CD4-positive, alpha-beta memory T cell (primary cell): ENCODE measurements at regions of chr1 and their contacts with region 1.

Region 1: DNA sequence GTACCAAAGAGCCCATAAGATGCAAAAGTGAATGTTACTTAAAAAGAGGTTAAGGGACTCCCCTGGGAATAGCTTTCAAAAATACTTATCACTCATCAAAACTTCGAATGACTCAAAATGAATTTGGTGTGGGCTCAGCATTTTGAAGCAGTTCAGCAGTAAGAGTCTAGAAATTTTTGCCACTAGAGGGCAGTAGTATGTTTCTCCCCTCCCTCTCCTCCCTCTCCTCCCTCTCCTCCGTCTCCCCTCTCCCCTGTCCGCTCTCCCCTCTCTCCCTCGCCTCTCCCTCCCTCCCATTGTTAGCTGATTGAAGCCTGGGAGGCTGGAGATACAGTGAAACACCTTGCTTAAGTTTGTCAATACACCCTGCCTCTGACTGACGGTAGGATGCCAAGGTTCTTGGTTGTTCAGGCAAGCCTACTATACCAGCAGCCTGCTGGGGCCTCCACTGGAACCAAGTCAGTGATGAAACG is 70.8 kb upstream of the TENT5C start:
- DNase-seq: peak; percentile 61 to 68 (median 66)
- H3K4me3 ChIP-seq: no peak overlapping the region
- H3K4me3 Mint-ChIP-seq: peak overlapping the region in 1 of 8 donors; percentile 21
- H3K27ac ChIP-seq: no peak overlapping the region
- H3K27ac Mint-ChIP-seq: peak overlapping the region in 3 of 7 donors; percentile 23 to 53 (median 27)
- H3K4me1 ChIP-seq: peaks cover 21% of the 10 kb centered on the region
- H3K4me1 Mint-ChIP-seq: peaks cover 0 to 6% (median 0%) of the 10 kb centered on the region in 4 donors
- H3K27me3 ChIP-seq: no peaks in the 10 kb centered on the region
- H3K27me3 Mint-ChIP-seq: no peaks in the 10 kb centered on the region

Region 2: GRCh38 chr1:117481410-117481809 is 53.6 kb before region 1 on chr1:
- CTCF ChIA-PET with region 1: no interaction called
- POLR2A ChIA-PET with region 1: no interaction called
- intact Hi-C with region 1: no loop called
- DNase-seq: no peak
- H3K4me3 ChIP-seq: no peak overlapping the region
- H3K4me3 Mint-ChIP-seq: peak overlapping the region in 1 of 8 donors; percentile 6
- H3K27ac ChIP-seq: no peak overlapping the region
- H3K27ac Mint-ChIP-seq: no peak overlapping the region
- H3K4me1 ChIP-seq: no peaks in the 10 kb centered on the region
- H3K4me1 Mint-ChIP-seq: peaks cover 0 to 6% (median 3%) of the 10 kb centered on the region in 4 donors
- H3K27me3 ChIP-seq: no peaks in the 10 kb centered on the region
- H3K27me3 Mint-ChIP-seq: no peaks in the 10 kb centered on the region

Region 3: DNA sequence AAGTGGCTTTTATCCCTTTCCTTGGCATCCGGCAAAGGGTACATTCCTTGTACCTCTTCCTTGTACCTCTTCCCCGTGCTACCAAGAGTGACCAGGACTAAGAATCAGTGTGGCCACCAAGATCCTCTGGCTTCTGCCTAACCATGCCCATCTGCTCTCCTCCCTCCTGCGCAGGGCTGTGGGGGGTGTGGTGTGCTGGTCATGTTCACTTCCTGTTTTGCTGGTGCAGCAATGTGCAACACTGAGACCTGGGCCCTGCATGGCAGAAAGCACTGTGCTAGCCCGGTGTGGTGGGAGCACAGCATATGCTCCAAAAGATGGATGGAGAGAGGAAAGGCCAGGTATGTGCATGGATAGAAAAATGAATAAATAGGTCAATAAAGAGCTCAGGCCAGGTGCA is 37.5 kb after region 1 on chr1:
- CTCF ChIA-PET with region 1: interaction called, 15 read pairs
- POLR2A ChIA-PET with region 1: no interaction called
- intact Hi-C with region 1: no loop called
- DNase-seq: peak in 4 of 5 donors; percentile 19 to 26 (median 20)
- H3K4me3 ChIP-seq: no peak overlapping the region
- H3K4me3 Mint-ChIP-seq: peak overlapping the region in 7 of 8 donors; percentile 22 to 78 (median 52)
- H3K27ac ChIP-seq: no peak overlapping the region
- H3K27ac Mint-ChIP-seq: peak overlapping the region in 5 of 7 donors; percentile 1 to 86 (median 60)
- H3K4me1 ChIP-seq: peaks cover 26% of the 10 kb centered on the region
- H3K4me1 Mint-ChIP-seq: peaks cover 13 to 36% (median 22%) of the 10 kb centered on the region in 4 donors
- H3K27me3 ChIP-seq: no peaks in the 10 kb centered on the region
- H3K27me3 Mint-ChIP-seq: no peaks in the 10 kb centered on the region

Region 4: DNA sequence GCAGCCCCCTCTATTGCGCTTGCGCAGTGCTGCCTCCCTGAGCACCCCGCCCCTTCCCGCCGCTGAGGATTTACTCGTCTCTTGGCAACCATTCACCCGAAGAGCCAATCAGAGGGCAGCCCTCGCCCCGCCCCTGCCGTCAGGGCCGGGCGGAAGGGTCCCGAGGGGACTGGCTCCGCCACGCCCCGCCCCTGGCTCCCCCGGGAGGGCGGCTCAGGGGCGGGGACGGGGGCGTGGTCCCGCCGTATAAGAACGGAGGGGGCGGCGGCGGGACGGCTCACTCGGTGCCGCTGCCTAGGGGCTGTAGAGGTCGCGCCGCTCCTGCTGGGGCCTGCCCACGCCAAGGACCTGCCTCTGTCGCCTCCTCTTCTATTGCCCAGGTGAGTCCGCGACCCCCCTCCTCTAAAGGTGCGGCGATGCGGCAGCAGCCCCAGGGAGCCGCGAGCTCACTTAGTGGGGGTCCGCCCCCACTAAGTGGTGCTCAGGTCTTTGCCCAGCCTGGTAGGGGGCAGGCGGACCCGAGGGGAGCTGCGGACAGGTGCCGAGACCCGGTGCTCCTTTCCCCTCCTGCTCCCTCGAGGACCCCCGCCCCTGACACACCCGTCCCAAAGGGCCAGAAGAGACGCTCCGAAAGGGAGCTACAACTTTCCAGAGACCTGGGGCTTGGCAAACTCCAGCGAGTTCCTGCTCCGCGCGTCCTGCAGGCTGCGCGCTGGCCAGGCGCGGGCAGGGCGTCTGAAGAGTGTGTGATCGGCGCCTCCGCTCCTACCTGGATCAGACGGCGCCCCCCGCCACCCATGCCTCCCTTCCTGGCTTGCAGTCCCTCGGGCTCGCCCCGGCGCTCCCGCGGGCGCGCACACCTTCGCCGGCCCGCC is 71.0 kb after region 1 on chr1 and contains the start of gene TENT5C:
- CTCF ChIA-PET with region 1: interaction called, 40 read pairs
- POLR2A ChIA-PET with region 1: interaction called, 24 read pairs
- intact Hi-C with region 1: loop called (anchors 1 kb)
- DNase-seq: peak; percentile 99 to 100 (median 99)
- H3K4me3 ChIP-seq: peak within 1 kb of the TSS; percentile 93 to 98
- H3K4me3 Mint-ChIP-seq: peak within 1 kb of the TSS; percentile 91 to 100 (median 98)
- H3K27ac ChIP-seq: peak within 1 kb of the TSS; percentile 92
- H3K27ac Mint-ChIP-seq: peak within 1 kb of the TSS; percentile 94 to 100 (median 99)
- H3K4me1 ChIP-seq: peaks cover 43% of the 10 kb centered on the region
- H3K4me1 Mint-ChIP-seq: peaks cover 28 to 59% (median 37%) of the 10 kb centered on the region in 4 donors
- H3K27me3 ChIP-seq: no peaks in the 10 kb centered on the region
- H3K27me3 Mint-ChIP-seq: no peaks in the 10 kb centered on the region
- total RNA-seq, gene TENT5C: 13.9 to 14.8 TPM

Region 5: GRCh38 chr1:117654493-117655219 is 119.6 kb after region 1 on chr1:
- CTCF ChIA-PET with region 1: interaction called, 89 read pairs
- POLR2A ChIA-PET with region 1: interaction called, 9 read pairs
- intact Hi-C with region 1: no loop called
- DNase-seq: peak in 4 of 5 donors; percentile 31 to 44 (median 37)
- H3K4me3 ChIP-seq: peak overlapping the region; percentile 8 to 20
- H3K4me3 Mint-ChIP-seq: peak overlapping the region; percentile 52 to 88 (median 76)
- H3K27ac ChIP-seq: peak overlapping the region; percentile 9
- H3K27ac Mint-ChIP-seq: peak overlapping the region; percentile 81 to 99 (median 94)
- H3K4me1 ChIP-seq: peaks cover 95% of the 10 kb centered on the region
- H3K4me1 Mint-ChIP-seq: peaks cover 75 to 92% (median 86%) of the 10 kb centered on the region in 4 donors
- H3K27me3 ChIP-seq: no peaks in the 10 kb centered on the region
- H3K27me3 Mint-ChIP-seq: no peaks in the 10 kb centered on the region

Region 6: GRCh38 chr1:117681143-117681542 is 146.1 kb after region 1 on chr1:
- CTCF ChIA-PET with region 1: interaction called, 278 read pairs
- POLR2A ChIA-PET with region 1: interaction called, 3 read pairs
- intact Hi-C with region 1: no loop called
- DNase-seq: no peak
- H3K4me3 ChIP-seq: no peak overlapping the region
- H3K4me3 Mint-ChIP-seq: no peak overlapping the region
- H3K27ac ChIP-seq: no peak overlapping the region
- H3K27ac Mint-ChIP-seq: no peak overlapping the region
- H3K4me1 ChIP-seq: no peaks in the 10 kb centered on the region
- H3K4me1 Mint-ChIP-seq: peaks cover 0 to 4% (median under 1%) of the 10 kb centered on the region in 4 donors
- H3K27me3 ChIP-seq: no peaks in the 10 kb centered on the region
- H3K27me3 Mint-ChIP-seq: peaks cover 0 to 2% of the 10 kb centered on the region in 2 donors

Region 7: DNA sequence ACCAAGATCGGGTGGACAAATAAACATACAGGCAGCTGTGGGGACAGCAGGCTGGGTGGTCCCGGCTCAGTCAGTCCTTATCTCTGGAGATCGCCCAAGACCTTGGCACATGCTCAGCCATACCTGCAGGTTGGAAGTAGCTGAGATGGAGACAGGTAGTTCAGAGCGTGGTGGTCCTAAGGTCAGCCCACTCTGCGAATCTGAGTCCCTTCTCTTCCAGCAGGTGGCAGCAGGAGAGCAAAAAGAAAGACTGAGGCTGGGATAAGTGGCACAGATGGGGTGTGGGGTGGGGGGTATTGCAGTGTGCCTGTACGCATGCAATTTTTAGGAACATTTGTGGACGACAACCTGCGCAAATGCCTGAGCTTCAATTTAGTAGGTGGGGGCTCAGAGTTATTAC is 175.7 kb after region 1 on chr1:
- CTCF ChIA-PET with region 1: no interaction called
- POLR2A ChIA-PET with region 1: no interaction called
- intact Hi-C with region 1: no loop called
- DNase-seq: no peak
- H3K4me3 ChIP-seq: no peak overlapping the region
- H3K4me3 Mint-ChIP-seq: no peak overlapping the region
- H3K27ac ChIP-seq: no peak overlapping the region
- H3K27ac Mint-ChIP-seq: no peak overlapping the region
- H3K4me1 ChIP-seq: no peaks in the 10 kb centered on the region
- H3K4me1 Mint-ChIP-seq: no peaks in the 10 kb centered on the region
- H3K27me3 ChIP-seq: no peaks in the 10 kb centered on the region
- H3K27me3 Mint-ChIP-seq: peaks cover 3 to 21% of the 10 kb centered on the region in 2 donors